ENCODE measurements at regions of chr11 and their contacts with region 1.

Region 1: GRCh38 chr11:48109046-48109666 is 107.5 kb upstream of the OR4B1 start:
- DNase-seq: no peak
- ATAC-seq: peak; percentile 55
- H3K4me3 ChIP-seq: no peak overlapping the region
- H3K4me1 ChIP-seq: peaks cover 26% of the 10 kb centered on the region
- CTCF ChIP-seq: no peak

Region 2: DNA sequence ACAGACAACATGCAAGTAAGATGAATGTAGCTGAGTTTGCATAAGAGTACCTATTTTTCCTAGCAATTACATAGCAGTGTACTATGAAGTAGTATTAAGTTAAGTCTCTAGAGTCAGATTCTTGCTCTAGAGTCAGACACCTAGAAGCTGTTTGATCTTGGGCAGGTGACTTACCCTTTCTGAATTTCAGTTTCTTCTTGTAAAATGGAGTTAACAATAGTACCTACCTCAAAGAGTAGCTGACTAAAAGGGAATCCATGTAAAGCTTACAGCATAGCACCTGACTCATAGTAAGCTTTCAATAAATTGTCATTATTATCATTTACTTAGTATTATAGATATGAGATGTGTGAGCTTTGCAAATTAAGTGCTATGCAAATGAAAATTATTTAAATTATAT is 176.6 kb before region 1 on chr11:
- intact Hi-C with region 1: loop called (anchors 5 kb)
- DNase-seq: no peak
- ATAC-seq: no peak
- H3K4me3 ChIP-seq: no peak overlapping the region
- H3K4me1 ChIP-seq: no peaks in the 10 kb centered on the region
- CTCF ChIP-seq: no peak

Region 3: GRCh38 chr11:47938791-47939560 is 170.2 kb before region 1 on chr11:
- intact Hi-C with region 1: loop called (anchors 5 kb)
- DNase-seq: no peak
- ATAC-seq: no peak
- H3K4me3 ChIP-seq: no peak overlapping the region
- H3K4me1 ChIP-seq: no peaks in the 10 kb centered on the region
- CTCF ChIP-seq: no peak

Measured in mucosa of descending colon (tissue), 3 donors.